Esophagus muscularis mucosa (tissue), 4 donors: ENCODE measurements at regions of chr17 and their contacts with region 1.

Region 1: DNA sequence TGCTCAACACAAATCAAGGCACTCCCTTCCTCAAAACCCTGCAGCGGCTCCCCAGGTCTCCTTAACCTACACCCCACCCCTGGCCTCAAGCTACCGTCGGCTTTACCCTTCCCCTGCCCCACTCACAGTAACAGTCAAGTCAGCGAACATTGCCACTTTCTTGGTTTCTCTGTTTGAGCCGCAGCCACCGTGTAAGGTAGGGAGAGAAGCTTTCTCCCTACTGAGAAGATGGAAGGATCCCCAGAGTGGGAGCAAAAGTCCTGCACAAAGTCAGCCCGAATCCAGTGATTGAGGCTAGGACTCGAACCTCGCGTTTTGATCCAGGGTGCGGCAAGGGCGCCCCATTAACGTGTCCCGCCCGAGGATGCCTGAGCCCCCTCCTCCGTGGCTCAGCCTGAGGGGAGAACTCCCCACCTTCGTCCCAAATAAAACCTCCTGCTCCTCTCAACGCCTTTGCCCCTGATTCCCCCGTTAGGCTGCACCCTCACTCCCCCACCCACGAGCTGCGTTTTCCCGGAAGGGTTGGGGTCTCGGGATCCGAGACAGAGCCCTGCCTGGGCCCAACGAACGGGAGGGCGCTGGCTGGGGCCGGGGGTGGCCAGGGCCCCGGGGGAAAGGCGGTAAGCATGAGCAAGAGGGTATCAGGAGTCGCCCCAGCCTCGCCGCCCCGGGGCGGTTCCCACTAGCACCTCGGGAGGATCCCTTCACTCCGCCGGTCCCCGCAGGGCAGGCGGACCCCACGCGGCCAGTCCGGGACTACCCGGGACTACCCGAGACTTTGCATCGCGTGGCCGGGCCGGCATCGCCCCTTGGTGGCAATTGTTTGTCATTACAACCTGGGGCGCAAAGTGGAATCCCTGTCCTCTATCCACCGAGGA is 9.9 kb upstream of the NAGS start:
- DNase-seq: no peak
- H3K4me3 ChIP-seq: peak overlapping the region; percentile 29 to 50 (median 40)
- H3K27ac ChIP-seq: no peak overlapping the region
- H3K4me1 ChIP-seq: peaks cover 9 to 12% (median 11%) of the 10 kb centered on the region in 4 donors
- H3K27me3 ChIP-seq: peaks cover 0 to 23% (median 13%) of the 10 kb centered on the region in 4 donors
- CTCF ChIP-seq: peak; percentile 74 to 90 (median 75)
- EP300 ChIP-seq: no peak
- POLR2A ChIP-seq: no peak

Region 2: DNA sequence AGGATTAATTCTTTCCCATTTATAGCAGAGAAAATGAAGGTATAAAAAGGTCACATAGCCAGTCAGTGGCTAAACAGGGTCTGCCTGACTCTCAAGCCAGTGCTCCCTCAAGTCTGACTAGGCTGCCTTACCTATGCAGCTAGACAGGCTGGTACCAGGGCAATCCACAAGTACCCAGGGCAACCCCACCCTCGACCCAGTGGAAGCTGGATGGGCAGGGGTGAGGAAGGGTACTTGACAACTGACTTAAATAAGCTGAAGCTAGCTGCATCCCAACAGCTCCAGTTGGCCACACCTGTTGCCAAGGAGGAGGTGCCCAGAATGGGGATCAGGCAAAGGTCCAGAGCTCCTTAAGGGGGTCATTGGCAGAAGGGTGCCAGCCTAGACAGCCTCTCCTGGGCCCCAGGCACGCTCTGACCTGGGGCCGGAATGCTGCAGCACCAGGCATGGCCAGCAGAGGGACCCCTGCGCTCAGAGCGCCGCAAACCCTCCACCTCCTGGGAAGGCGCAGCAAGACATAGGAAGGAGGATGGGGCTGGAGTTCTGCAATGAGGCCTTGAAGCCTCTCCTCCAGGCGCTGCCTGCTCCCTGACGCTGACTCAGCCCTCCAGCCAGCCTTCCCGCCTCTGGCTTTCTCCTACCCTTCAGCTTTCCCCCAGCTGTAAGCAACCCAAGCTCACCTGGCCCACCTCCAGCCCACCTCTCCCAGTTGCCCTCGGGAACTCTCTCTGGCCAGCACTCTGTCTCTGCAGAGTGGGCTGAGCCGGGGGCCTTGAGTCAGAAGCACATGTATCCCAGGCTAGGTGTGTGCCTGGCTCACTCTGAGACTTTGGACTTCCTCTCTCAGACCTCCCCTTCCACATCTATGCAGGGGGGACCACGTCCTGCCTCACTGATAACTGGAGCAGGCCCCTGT is 116.0 kb before region 1 on chr17:
- intact Hi-C with region 1: loop called (anchors 10 kb)
- DNase-seq: no peak
- H3K4me3 ChIP-seq: no peak overlapping the region
- H3K27ac ChIP-seq: no peak overlapping the region
- H3K4me1 ChIP-seq: peaks cover 7 to 9% (median 9%) of the 10 kb centered on the region in 4 donors
- H3K27me3 ChIP-seq: no peaks in the 10 kb centered on the region
- CTCF ChIP-seq: peak; percentile 90 to 98 (median 93)
- EP300 ChIP-seq: no peak
- POLR2A ChIP-seq: no peak